Activated CD4-positive, alpha-beta T cell treated with anti-CD3 and anti-CD28 coated beads for 36 hours (primary cell): ENCODE measurements at regions of chr3 and their contacts with region 1.

Region 1: DNA sequence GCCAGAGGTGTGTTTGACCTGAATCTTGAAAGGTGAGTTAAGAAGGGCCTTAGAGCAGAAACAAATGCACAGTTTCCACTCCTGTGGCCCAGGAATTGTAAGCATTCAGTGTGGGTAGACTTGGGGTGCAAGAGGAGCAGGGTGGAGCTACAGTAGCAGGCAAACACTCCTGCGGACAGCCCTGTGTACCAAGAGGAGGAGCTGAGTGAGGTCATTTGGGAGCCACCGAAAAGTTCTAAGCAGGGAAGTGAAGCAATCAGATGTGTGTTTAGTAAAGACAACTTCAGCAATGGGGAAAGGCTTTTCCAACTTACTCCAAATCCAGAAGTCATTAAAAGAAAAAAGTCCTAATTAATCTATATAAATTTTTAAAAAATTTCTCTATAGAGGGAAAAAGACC is 99.3 kb downstream of the ARHGEF26 start:
- DNase-seq: no peak
- ATAC-seq: no peak
- H3K4me3 Mint-ChIP-seq: no peak overlapping the region
- H3K27ac Mint-ChIP-seq: no peak overlapping the region
- H3K4me1 Mint-ChIP-seq: no peaks in the 10 kb centered on the region
- H3K27me3 Mint-ChIP-seq: peaks cover 5% of the 10 kb centered on the region

Region 2: GRCh38 chr3:154197751-154198150 is 22.7 kb before region 1 on chr3:
- CTCF ChIA-PET with region 1: interaction called, 3 read pairs
- POLR2A ChIA-PET with region 1: no interaction called
- intact Hi-C with region 1: loop called in 1 of 2 experiments (anchors 1 kb)
- DNase-seq: no peak
- ATAC-seq: no peak
- H3K4me3 Mint-ChIP-seq: no peak overlapping the region
- H3K27ac Mint-ChIP-seq: no peak overlapping the region
- H3K4me1 Mint-ChIP-seq: no peaks in the 10 kb centered on the region
- H3K27me3 Mint-ChIP-seq: peaks cover 9% of the 10 kb centered on the region

Region 3: DNA sequence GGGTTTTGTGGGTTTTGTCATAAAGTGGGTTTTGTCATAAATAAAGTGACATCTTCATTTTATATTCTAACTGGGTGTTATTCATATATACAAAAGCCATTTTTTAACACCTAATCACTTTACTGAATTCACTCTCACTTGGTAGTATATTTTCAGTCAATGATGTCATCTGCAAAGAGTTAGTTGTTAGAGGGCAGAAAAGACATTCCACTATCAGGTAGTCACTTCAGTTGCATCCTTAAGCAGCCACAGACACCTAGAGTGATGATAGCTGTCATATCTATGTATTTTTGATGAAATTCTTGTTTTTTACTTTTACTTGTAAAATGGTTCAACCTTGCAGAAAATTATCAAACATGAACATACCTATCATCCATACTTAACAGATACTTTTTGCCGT is 14.9 kb after region 1 on chr3:
- CTCF ChIA-PET with region 1: no interaction called
- POLR2A ChIA-PET with region 1: no interaction called
- intact Hi-C with region 1: no loop called
- DNase-seq: no peak
- ATAC-seq: no peak
- H3K4me3 Mint-ChIP-seq: no peak overlapping the region
- H3K27ac Mint-ChIP-seq: no peak overlapping the region
- H3K4me1 Mint-ChIP-seq: peaks cover 12% of the 10 kb centered on the region
- H3K27me3 Mint-ChIP-seq: peaks cover 26% of the 10 kb centered on the region